PC-9 (cell line): ENCODE measurements at regions of chr17 and their contacts with region 1.

Region 1: GRCh38 chr17:43338886-43339516 is 59.8 kb upstream of the ARL4D start:
- DNase-seq: peak; percentile 41 to 66
- H3K4me3 ChIP-seq: no peak overlapping the region
- H3K27ac ChIP-seq: no peak overlapping the region
- H3K4me1 ChIP-seq: peaks cover 2% of the 10 kb centered on the region; the same call in 1 of the 2 replicates
- H3K27me3 ChIP-seq: no peaks in the 10 kb centered on the region
- CTCF ChIP-seq: peak; percentile 81

Region 2: GRCh38 chr17:41635121-41636097 is 1703.6 kb before region 1 on chr17:
- CTCF ChIA-PET with region 1: no interaction called
- POLR2A ChIA-PET with region 1: no interaction called
- intact Hi-C with region 1: no loop called
- DNase-seq: no peak
- H3K4me3 ChIP-seq: no peak overlapping the region
- H3K27ac ChIP-seq: no peak overlapping the region
- H3K4me1 ChIP-seq: no peaks in the 10 kb centered on the region
- H3K27me3 ChIP-seq: no peaks in the 10 kb centered on the region
- CTCF ChIP-seq: no peak

Region 3: DNA sequence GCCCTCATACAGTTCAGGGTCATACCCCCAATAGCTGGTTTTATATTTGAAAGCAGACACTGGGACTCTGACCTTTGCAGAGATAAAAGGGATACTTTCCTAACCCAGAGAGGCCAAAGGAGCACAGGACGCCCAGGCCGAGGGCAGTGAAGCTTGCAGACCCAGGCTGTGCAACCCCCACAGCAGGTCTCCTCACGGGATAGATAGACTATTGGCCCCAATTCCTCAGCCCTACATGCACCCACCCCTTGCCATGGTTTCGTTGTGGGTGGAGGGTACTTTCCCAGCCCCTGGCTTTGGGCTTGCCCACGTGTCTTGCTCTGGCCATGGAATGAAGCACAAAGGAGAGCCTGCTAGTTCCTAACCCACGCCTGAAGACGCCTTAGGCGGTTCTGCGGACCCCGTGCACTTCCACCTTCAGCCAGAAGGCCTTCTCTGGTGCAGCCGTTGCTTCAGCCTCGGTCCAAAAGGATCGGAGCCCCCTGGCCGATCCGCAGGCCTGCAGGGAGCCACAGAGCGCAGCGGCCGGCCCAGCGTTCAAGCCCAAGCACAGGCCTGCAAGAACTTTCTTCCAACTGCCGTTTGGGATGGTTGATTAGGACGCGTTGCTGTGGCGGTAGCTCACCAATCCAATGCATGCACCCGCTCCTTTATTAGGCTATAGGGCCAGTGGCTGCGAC is 204.1 kb before region 1 on chr17:
- CTCF ChIA-PET with region 1: no interaction called
- POLR2A ChIA-PET with region 1: no interaction called
- intact Hi-C with region 1: no loop called
- DNase-seq: no peak
- H3K4me3 ChIP-seq: no peak overlapping the region
- H3K27ac ChIP-seq: no peak overlapping the region
- H3K4me1 ChIP-seq: no peaks in the 10 kb centered on the region
- H3K27me3 ChIP-seq: no peaks in the 10 kb centered on the region
- CTCF ChIP-seq: no peak

Region 4: DNA sequence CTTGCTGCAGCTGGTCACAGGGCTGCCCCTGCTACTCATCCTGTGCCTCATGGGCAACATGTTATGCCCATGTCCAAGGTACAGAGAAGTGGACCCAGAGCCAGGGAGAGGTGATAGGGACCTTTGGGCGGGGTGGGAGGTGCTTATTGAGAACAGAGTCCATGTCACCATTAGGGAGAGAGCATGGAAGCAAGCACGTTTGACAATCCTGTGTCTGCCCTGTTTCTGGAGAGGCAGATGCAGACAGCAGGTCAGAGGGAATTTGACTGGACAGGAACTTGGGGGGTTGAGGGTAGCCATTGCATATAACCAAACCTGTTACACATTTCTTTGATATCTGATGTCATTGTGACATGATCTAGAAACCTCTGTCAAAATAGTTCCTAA is 45.5 kb after region 1 on chr17:
- CTCF ChIA-PET with region 1: no interaction called
- POLR2A ChIA-PET with region 1: no interaction called
- intact Hi-C with region 1: no loop called
- DNase-seq: no peak
- H3K4me3 ChIP-seq: no peak overlapping the region
- H3K27ac ChIP-seq: no peak overlapping the region
- H3K4me1 ChIP-seq: peaks cover 6% of the 10 kb centered on the region
- H3K27me3 ChIP-seq: no peaks in the 10 kb centered on the region
- CTCF ChIP-seq: no peak

Region 5: GRCh38 chr17:43456661-43457361 is 117.8 kb after region 1 on chr17:
- CTCF ChIA-PET with region 1: no interaction called
- POLR2A ChIA-PET with region 1: no interaction called
- intact Hi-C with region 1: no loop called
- DNase-seq: no peak
- H3K4me3 ChIP-seq: no peak overlapping the region
- H3K27ac ChIP-seq: no peak overlapping the region
- H3K4me1 ChIP-seq: peaks cover 25% of the 10 kb centered on the region
- H3K27me3 ChIP-seq: no peaks in the 10 kb centered on the region
- CTCF ChIP-seq: no peak

Region 6: GRCh38 chr17:43562679-43563599 is 223.9 kb after region 1 on chr17:
- CTCF ChIA-PET with region 1: interaction called, 13 read pairs
- POLR2A ChIA-PET with region 1: no interaction called
- intact Hi-C with region 1: no loop called
- DNase-seq: no peak
- H3K4me3 ChIP-seq: no peak overlapping the region
- H3K27ac ChIP-seq: no peak overlapping the region
- H3K4me1 ChIP-seq: no peaks in the 10 kb centered on the region
- H3K27me3 ChIP-seq: no peaks in the 10 kb centered on the region
- CTCF ChIP-seq: no peak